ENCODE measurements at regions of chr1 and their contacts with region 1.

Region 1: DNA sequence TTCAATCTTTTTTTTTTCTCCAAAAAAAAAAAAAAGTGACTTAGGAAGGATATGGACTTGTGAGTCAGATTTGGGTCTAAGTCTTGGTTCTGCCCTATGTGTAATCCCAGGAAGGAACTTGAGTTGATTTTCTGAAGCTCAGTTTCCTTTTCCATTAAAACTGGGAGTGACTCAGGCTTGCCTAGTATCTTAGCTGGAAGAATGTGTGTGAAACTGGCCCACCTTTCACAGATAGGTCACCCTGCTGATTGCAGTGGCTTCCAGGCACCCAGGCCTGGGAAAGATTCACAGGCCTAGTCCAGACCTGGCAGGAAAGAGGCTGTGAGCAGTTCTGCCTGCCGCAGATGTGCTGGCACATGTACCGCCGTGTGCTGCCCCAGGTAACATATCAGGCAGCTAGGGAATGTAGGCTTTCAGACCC is 218.3 kb upstream of the HOOK1 start:
- DNase-seq: peak; percentile 85
- ATAC-seq: peak; percentile 84
- H3K4me3 ChIP-seq: no peak overlapping the region
- H3K27ac ChIP-seq: peak overlapping the region; percentile 94
- H3K4me1 ChIP-seq: peaks cover 25% of the 10 kb centered on the region
- H3K27me3 ChIP-seq: no peaks in the 10 kb centered on the region
- CTCF ChIP-seq: no peak

Region 2: DNA sequence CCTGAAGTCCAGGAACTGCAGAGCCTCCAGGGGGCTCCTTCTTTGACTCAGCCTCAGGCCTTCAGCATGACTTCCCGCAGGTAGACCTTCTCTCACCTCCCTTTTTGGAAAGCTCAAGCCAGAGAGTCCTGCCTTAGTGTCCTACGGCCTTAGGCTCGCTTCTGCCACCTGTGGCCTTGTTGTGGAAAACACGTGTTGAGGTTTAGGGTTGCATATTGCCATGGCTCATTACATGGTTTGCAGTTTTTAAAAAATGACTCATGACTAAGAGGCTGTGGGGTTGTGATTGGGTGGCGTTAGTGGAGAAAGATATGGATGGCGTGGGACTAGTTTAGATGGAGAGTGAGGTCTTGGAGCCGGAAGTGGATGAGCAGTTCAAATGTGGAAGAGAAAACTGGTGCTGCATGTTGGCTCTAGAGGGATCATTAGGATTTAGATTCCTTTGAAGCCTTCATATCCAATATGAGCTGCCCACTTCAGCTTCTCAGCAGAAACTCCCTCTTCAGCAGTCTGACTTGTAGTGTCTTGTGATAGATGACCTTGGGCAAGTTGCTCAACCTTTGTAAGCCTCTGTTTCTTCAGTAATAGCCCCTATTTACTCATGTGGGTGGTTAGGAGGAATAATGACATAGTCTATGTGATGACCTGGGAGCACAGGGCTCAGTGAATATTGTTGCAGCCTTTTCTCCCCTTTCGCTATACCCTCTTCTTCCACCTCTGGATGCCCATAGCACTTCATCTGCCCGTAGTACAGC is 306.1 kb before region 1 on chr1:
- CTCF ChIA-PET with region 1: no interaction called
- POLR2A ChIA-PET with region 1: no interaction called
- intact Hi-C with region 1: no loop called
- DNase-seq: peak; percentile 81
- ATAC-seq: peak; percentile 93
- H3K4me3 ChIP-seq: no peak overlapping the region
- H3K27ac ChIP-seq: no peak overlapping the region
- H3K4me1 ChIP-seq: peaks cover 5% of the 10 kb centered on the region
- H3K27me3 ChIP-seq: no peaks in the 10 kb centered on the region
- CTCF ChIP-seq: peak; percentile 75

Region 3: DNA sequence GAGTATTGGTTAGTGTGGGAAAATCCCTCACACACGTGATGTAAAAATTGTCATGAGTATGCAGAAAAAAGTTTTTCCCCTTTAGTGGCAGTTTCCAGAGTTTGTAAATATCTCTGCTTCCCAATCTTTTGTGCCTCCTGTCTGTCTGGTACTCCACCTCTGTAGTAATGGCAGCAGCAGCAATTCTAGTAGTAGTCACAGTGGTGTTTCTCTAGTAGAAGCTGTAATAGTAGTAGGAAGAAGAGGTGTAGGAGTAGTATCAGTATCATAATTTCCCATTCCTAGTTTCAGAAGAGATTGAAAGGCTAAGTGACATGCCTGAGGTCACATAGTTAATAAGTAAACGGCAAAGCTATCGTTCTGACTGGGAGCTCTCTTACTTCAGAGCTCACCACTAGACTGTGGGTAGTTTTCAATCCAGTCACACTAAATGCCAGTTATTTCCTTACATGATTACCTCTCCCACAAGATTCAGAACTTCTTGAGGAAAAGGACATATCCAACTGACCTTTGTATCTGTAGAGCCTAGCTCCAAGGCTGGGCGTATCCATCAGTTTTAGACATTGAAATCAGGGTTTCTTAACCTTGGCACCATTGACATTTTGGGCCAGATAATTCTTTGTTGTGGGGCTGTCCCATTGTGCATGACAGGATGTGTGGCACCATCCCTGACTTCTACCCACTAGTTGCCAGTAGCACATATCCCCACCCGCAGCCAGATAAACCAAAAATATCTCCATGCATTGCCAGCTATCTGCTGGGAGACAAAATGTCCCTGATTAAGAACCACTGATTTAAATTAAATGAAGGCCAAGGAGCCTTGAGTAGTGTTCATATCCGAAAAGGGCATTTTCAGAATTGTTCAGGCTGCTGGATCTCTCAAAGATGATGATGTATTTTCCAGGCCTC is 163.7 kb before region 1 on chr1:
- CTCF ChIA-PET with region 1: no interaction called
- POLR2A ChIA-PET with region 1: interaction called, 3 read pairs
- intact Hi-C with region 1: loop called (anchors 5 kb)
- DNase-seq: no peak
- ATAC-seq: no peak
- H3K4me3 ChIP-seq: no peak overlapping the region
- H3K27ac ChIP-seq: peak overlapping the region; percentile 84
- H3K4me1 ChIP-seq: peaks cover 54% of the 10 kb centered on the region
- H3K27me3 ChIP-seq: no peaks in the 10 kb centered on the region
- CTCF ChIP-seq: no peak

Region 4: DNA sequence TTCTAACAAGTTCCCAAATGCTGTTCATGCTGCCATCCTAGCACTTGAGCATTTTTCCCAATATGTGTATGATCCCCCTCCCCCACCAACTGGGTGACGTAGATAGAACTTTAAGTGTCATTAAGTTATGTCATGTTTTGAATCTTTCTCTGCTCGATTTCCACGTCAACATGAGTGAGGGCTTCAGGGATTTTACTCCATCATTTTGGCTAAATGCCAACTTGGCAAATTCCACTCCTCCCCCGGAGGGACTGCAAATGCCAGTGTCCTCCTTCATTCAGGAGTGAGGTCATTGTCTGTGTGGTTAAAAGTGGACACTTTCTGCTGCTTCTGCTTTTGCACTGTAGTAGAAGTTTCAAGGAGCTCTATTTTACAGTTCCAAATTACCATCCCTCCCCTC is 97.8 kb before region 1 on chr1:
- CTCF ChIA-PET with region 1: no interaction called
- POLR2A ChIA-PET with region 1: interaction called, 16 read pairs
- intact Hi-C with region 1: loop called (anchors 1 kb)
- DNase-seq: no peak
- ATAC-seq: no peak
- H3K4me3 ChIP-seq: no peak overlapping the region
- H3K27ac ChIP-seq: peak overlapping the region; percentile 58; the same call in 1 of the 2 replicates
- H3K4me1 ChIP-seq: peaks cover 22% of the 10 kb centered on the region
- H3K27me3 ChIP-seq: no peaks in the 10 kb centered on the region
- CTCF ChIP-seq: no peak

Region 5: DNA sequence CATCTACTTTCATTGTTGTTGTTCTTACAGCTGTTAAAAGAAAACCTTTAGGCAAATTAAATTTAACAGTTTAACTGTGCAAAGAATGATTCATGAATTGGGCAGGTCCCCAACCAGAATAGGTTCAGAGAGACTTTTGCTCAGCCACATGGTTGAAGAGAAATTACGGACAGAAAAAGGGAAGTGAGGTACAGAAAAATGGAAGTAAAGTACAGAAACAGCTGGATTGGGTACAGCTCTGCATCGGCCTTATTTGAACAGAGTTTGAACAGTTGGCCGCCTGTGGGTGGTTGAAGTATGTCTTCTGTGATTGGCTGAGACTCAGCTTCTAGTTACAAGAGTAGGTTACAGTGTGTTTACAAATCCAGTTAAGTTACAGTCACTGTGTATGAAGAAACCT is 89.5 kb before region 1 on chr1:
- CTCF ChIA-PET with region 1: no interaction called
- POLR2A ChIA-PET with region 1: no interaction called
- intact Hi-C with region 1: loop called (anchors 1 kb)
- DNase-seq: peak; percentile 64
- ATAC-seq: peak; percentile 94
- H3K4me3 ChIP-seq: 0 out of 2 replicates have a peak overlapping the region, but pooled peaks have one; percentile 3
- H3K27ac ChIP-seq: peak overlapping the region; percentile 52
- H3K4me1 ChIP-seq: peaks cover 19% of the 10 kb centered on the region
- H3K27me3 ChIP-seq: no peaks in the 10 kb centered on the region
- CTCF ChIP-seq: no peak

Region 6: DNA sequence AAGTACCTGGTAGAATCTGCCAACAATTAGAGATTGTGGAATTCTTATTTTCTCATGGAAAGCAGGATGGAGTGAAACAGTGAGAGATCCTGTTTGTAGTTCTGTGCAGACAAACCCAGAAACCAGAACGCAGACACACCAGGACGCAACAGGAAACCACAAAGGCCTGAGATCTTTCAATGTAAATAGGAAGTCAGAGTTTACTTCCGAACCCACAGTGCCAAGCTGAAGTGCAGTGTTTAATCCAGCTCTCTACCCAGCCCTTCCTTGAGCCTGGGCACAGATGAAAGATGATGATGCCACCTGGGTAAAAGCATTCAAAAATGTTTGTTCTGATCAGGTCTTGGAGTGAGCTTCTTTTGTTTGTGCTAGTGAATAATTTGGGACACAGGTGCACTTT is 25.9 kb before region 1 on chr1:
- CTCF ChIA-PET with region 1: no interaction called
- POLR2A ChIA-PET with region 1: no interaction called
- intact Hi-C with region 1: loop called (anchors 1 kb)
- DNase-seq: peak; percentile 60
- ATAC-seq: peak; percentile 92
- H3K4me3 ChIP-seq: no peak overlapping the region
- H3K27ac ChIP-seq: peak overlapping the region; percentile 54
- H3K4me1 ChIP-seq: peaks cover 16% of the 10 kb centered on the region
- H3K27me3 ChIP-seq: no peaks in the 10 kb centered on the region
- CTCF ChIP-seq: no peak

Region 7: DNA sequence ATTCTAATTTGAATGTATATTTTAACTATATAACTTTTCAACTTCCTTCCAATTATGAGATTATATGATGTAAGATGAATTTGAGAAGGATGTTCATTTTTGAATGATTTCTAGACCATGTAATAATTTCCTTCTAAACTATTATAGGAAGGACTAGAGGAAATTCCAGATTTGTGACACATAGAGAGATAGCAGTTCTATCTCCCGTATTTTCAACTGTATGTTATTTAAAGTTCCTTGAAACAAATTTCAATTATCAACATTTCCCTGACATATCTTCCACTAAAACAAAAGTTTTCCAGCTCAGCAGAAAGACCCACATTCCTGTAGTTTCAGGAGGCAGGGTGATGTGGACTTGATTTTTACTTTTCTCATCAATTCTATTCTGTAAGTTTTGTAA is 873.8 kb after region 1 on chr1:
- CTCF ChIA-PET with region 1: no interaction called
- POLR2A ChIA-PET with region 1: no interaction called
- intact Hi-C with region 1: no loop called
- DNase-seq: no peak
- ATAC-seq: no peak
- H3K4me3 ChIP-seq: no peak overlapping the region
- H3K27ac ChIP-seq: no peak overlapping the region
- H3K4me1 ChIP-seq: no peaks in the 10 kb centered on the region
- H3K27me3 ChIP-seq: peaks cover 4% of the 10 kb centered on the region; the same call in 1 of the 2 replicates
- CTCF ChIP-seq: no peak